Activated CD4-positive, alpha-beta memory T cell treated with anti-CD3 and anti-CD28 coated beads, Interleukin-2, amount 10 ng/mL, durations not matched to agents 7 days and 5 days (primary cell): ENCODE measurements at regions of chr5 and their contacts with region 1.

Region 1: GRCh38 chr5:134904630-134905245 is at the start of gene PCBD2:
- DNase-seq: peak; percentile 94
- H3K4me3 Mint-ChIP-seq: peak within 1 kb of the TSS; percentile 95
- H3K27ac Mint-ChIP-seq: peak within 1 kb of the TSS; percentile 98
- H3K4me1 Mint-ChIP-seq: peaks cover 29% of the 10 kb centered on the region
- H3K27me3 Mint-ChIP-seq: no peaks in the 10 kb centered on the region
- total RNA-seq, gene PCBD2: 13.6 to 14.7 TPM

Region 2: DNA sequence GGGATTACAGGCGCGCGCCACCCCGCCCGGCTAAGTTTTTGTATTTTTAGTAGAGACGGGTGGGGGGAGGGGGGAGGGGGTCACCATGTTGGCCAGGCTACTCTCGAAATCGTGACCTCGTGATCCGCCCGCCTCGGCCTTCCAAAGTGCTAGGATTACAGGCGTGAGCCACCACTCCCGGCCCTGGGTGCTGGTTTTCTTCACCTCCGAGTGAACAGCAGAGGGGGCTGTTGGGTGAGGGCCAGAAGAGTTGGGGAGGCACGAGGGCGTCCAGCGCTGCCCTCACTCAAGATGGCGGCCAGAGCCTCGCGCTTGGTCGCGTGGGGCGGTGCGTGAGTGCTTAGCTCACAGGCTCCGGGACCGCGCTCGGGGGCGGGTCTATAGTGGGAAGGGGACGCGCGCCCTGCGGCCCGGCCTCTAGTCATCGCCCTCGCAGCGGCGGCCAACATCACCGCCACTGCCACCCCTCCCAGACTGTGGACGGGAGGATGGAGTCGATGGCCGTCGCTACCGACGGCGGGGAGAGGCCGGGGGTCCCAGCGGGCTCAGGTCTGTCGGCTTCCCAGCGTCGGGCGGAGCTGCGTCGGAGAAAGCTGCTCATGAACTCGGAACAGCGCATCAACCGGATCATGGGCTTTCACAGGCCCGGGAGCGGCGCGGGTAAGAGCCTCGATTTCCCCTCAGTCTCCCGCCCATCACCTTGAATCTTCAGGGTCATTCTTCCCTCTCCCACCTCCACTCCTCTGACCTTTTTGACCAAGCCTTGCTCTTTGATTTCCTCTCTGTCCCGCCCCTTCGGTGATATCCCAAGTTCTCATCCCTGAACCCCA is 166.4 kb before region 1 on chr5 and contains the start of gene CAMLG:
- CTCF ChIA-PET with region 1: interaction called, 28 read pairs
- POLR2A ChIA-PET with region 1: interaction called, 27 read pairs
- DNase-seq: peak; percentile 98
- H3K4me3 Mint-ChIP-seq: peak within 1 kb of the TSS; percentile 92
- H3K27ac Mint-ChIP-seq: peak within 1 kb of the TSS; percentile 84
- H3K4me1 Mint-ChIP-seq: peaks cover 34% of the 10 kb centered on the region
- H3K27me3 Mint-ChIP-seq: no peaks in the 10 kb centered on the region
- total RNA-seq, gene CAMLG: 30.5 to 31.0 TPM

Region 3: GRCh38 chr5:134784241-134784920 is 120.4 kb before region 1 on chr5:
- CTCF ChIA-PET with region 1: interaction called, 10 read pairs
- POLR2A ChIA-PET with region 1: interaction called, 4 read pairs
- DNase-seq: no peak
- H3K4me3 Mint-ChIP-seq: no peak overlapping the region
- H3K27ac Mint-ChIP-seq: no peak overlapping the region
- H3K4me1 Mint-ChIP-seq: no peaks in the 10 kb centered on the region
- H3K27me3 Mint-ChIP-seq: no peaks in the 10 kb centered on the region

Region 4: DNA sequence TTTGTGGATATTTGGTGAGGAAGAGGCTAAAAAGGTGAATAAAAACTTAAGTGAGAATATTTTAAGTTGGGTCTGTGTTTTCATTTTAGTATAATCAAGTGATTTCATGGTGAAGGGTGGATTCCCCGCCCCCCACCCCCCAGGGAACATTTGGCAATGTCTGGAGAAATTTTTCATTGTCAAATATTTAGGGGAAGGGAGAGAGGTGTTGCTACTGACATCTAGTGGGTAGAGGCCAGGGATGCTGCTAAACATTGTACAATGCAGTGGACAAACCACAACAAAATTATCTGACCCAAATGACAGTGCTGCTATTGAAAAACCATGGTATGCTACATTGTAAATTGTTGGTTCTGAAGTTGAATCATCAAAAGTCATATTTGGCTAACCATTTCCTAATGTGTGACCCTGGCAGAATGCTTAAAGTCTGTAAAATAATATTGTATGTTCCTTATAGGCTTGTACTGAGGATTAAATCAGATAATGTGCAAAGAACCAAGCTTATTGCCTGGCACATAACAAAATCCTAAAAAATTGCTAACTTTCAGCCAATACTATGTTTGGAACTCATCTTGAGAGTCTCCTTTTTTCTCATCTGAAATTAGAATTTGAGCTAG is 53.3 kb before region 1 on chr5:
- CTCF ChIA-PET with region 1: interaction called, 27 read pairs
- POLR2A ChIA-PET with region 1: interaction called, 26 read pairs
- DNase-seq: no peak
- H3K4me3 Mint-ChIP-seq: no peak overlapping the region
- H3K27ac Mint-ChIP-seq: no peak overlapping the region
- H3K4me1 Mint-ChIP-seq: peaks cover 52% of the 10 kb centered on the region
- H3K27me3 Mint-ChIP-seq: no peaks in the 10 kb centered on the region

Region 5: GRCh38 chr5:134873987-134874830 is 30.5 kb before region 1 on chr5 and contains the start of gene TXNDC15:
- CTCF ChIA-PET with region 1: interaction called, 19 read pairs
- POLR2A ChIA-PET with region 1: interaction called, 83 read pairs
- DNase-seq: peak; percentile 86
- H3K4me3 Mint-ChIP-seq: peak within 1 kb of the TSS; percentile 95
- H3K27ac Mint-ChIP-seq: peak within 1 kb of the TSS; percentile 95
- H3K4me1 Mint-ChIP-seq: peaks cover 42% of the 10 kb centered on the region
- H3K27me3 Mint-ChIP-seq: no peaks in the 10 kb centered on the region
- total RNA-seq, gene TXNDC15: 51.0 to 56.9 TPM

Region 6: GRCh38 chr5:134917070-134917815 is 12.5 kb after region 1 on chr5:
- CTCF ChIA-PET with region 1: interaction called, 45 read pairs
- POLR2A ChIA-PET with region 1: interaction called, 18 read pairs
- DNase-seq: no peak
- H3K4me3 Mint-ChIP-seq: no peak overlapping the region
- H3K27ac Mint-ChIP-seq: no peak overlapping the region
- H3K4me1 Mint-ChIP-seq: peaks cover 23% of the 10 kb centered on the region
- H3K27me3 Mint-ChIP-seq: no peaks in the 10 kb centered on the region

Region 7: GRCh38 chr5:135050244-135050767 is 145.6 kb after region 1 on chr5:
- CTCF ChIA-PET with region 1: no interaction called
- POLR2A ChIA-PET with region 1: no interaction called
- DNase-seq: no peak
- H3K4me3 Mint-ChIP-seq: no peak overlapping the region
- H3K27ac Mint-ChIP-seq: no peak overlapping the region
- H3K4me1 Mint-ChIP-seq: no peaks in the 10 kb centered on the region
- H3K27me3 Mint-ChIP-seq: peaks cover 73% of the 10 kb centered on the region

Region 8: GRCh38 chr5:135085127-135085935 is 180.6 kb after region 1 on chr5:
- CTCF ChIA-PET with region 1: no interaction called
- POLR2A ChIA-PET with region 1: no interaction called
- DNase-seq: no peak
- H3K4me3 Mint-ChIP-seq: no peak overlapping the region
- H3K27ac Mint-ChIP-seq: no peak overlapping the region
- H3K4me1 Mint-ChIP-seq: no peaks in the 10 kb centered on the region
- H3K27me3 Mint-ChIP-seq: peaks cover 8% of the 10 kb centered on the region